ENCODE measurements at regions of chr9 and their contacts with region 1.

Region 1: GRCh38 chr9:36407122-36407723 is 7.2 kb upstream of the RNF38 start:
- DNase-seq: peak; percentile 76
- H3K4me3 Mint-ChIP-seq: no peak overlapping the region
- H3K27ac Mint-ChIP-seq: peak overlapping the region; percentile 56
- H3K4me1 Mint-ChIP-seq: peaks cover 10% of the 10 kb centered on the region
- H3K27me3 Mint-ChIP-seq: no peaks in the 10 kb centered on the region

Region 2: DNA sequence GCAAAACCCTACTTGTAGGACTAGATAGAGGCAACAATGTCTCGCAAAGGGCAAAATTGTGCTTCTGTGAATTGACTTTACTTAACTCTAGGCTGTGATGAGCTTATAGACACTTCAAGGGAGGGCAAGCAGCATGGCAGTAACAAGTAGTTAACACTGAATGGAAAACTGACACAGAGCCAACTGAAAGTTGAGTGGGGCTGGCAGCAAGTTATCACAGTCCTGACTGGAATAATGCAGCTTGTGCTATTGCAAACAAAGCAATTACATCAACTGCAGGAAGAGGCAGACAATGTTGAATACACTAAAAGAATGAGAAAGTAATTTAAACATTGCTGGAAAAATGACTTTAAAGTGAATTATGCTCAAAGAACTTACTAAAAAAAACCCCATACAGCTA is 69.4 kb before region 1 on chr9:
- CTCF ChIA-PET with region 1: no interaction called
- DNase-seq: no peak
- H3K4me3 Mint-ChIP-seq: no peak overlapping the region
- H3K27ac Mint-ChIP-seq: no peak overlapping the region
- H3K4me1 Mint-ChIP-seq: peaks cover 7% of the 10 kb centered on the region
- H3K27me3 Mint-ChIP-seq: no peaks in the 10 kb centered on the region

Region 3: GRCh38 chr9:36436909-36437308 is 29.7 kb after region 1 on chr9:
- CTCF ChIA-PET with region 1: interaction called, 26 read pairs
- DNase-seq: no peak
- H3K4me3 Mint-ChIP-seq: no peak overlapping the region
- H3K27ac Mint-ChIP-seq: no peak overlapping the region
- H3K4me1 Mint-ChIP-seq: peaks cover 7% of the 10 kb centered on the region
- H3K27me3 Mint-ChIP-seq: no peaks in the 10 kb centered on the region

Region 4: DNA sequence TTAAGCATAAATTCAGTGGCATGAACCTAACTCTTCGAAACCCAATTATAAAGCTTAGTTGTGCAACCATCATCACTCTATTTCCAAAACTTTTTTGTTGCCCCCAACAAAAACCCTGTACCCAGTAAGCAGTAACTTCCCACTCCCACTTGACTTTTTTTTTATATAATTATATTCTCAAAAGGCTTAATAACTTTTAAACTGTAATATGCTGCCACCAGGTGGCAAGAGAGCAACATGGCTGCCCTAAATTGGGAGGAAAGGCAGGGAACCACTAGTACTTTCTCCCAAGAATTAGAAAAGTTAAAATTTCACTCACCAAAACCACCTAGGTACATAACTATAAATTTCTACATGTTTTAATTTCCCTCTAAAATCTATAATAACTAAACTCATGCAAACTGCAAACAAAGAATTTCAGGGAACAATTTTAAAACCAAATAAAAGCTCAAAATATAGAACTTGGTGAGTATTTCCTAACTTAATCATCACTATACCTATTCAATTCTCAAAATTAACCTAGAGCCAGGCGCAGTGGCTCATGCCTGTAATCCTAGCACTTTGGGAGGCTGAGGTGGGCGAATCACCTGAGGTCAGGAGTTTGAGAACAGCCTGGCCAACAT is 43.0 kb after region 1 on chr9:
- CTCF ChIA-PET with region 1: interaction called, 47 read pairs
- DNase-seq: peak; percentile 45
- H3K4me3 Mint-ChIP-seq: no peak overlapping the region
- H3K27ac Mint-ChIP-seq: no peak overlapping the region
- H3K4me1 Mint-ChIP-seq: peaks cover 7% of the 10 kb centered on the region
- H3K27me3 Mint-ChIP-seq: no peaks in the 10 kb centered on the region

Region 5: DNA sequence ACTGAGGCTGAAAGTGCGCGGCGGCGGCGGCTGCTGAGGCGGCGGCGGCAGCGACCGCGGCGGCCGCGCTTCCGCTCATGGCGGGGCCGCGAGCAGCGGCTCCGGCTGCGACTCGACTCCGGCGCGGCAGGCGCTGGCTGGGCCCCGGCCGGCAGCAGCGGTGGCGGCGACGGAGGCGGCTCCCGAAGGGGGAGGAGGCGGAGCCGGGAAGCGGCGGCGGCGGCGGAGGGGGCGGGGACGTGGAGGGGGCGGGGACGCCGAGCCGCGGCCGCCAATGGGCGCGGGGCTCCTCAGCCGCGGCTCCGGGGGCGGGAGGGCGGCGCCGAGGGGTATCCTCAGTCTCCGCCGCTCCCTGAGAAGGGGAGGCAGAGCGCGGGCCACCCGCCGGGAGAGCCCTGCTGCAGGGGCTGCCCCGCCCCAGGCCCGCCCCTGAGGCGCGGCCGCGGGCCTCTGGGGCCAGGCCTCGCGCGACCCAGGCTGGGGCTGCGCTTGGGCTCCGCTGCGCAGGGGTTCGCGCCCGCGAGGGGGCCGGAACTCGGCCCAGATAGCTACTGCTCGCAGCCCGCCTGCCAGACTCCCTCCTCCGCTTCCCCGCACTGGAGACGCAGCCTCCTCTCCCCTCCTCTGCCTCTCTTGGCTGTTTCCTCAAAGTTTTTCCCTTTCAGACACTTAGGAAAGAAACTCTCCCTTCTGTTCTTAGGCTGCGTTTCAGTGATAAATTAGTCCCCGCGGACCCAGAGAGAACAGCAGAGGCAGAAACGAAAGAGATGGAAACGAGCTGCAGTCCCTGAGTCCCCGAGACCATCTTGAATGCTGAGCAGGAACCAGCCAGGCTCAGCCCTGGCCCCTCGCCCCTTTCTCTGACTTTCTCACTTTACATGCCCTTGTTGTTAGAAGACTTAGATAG is 80.5 kb after region 1 on chr9:
- CTCF ChIA-PET with region 1: interaction called, 18 read pairs
- DNase-seq: peak; percentile 91
- H3K4me3 Mint-ChIP-seq: peak overlapping the region; percentile 91
- H3K27ac Mint-ChIP-seq: peak overlapping the region; percentile 98
- H3K4me1 Mint-ChIP-seq: peaks cover 55% of the 10 kb centered on the region
- H3K27me3 Mint-ChIP-seq: no peaks in the 10 kb centered on the region

Region 6: GRCh38 chr9:36728651-36729520 is 321.7 kb after region 1 on chr9:
- CTCF ChIA-PET with region 1: interaction called, 38 read pairs
- DNase-seq: peak; percentile 81
- H3K4me3 Mint-ChIP-seq: no peak overlapping the region
- H3K27ac Mint-ChIP-seq: no peak overlapping the region
- H3K4me1 Mint-ChIP-seq: no peaks in the 10 kb centered on the region
- H3K27me3 Mint-ChIP-seq: peaks cover 10% of the 10 kb centered on the region

Measured in activated naive CD4-positive, alpha-beta T cell treated with anti-CD3 and anti-CD28 coated beads, Interleukin-2, amount 10 ng/mL, durations not matched to agents 7 days and 5 days (primary cell).